CD4-positive, alpha-beta T cell (primary cell): ENCODE measurements at regions of chr9 and their contacts with region 1.

Region 1: GRCh38 chr9:7976167-7976755 is 176.7 kb upstream of the DMAC1 start:
- DNase-seq: peak in 12 of 14 experiments; percentile 4 to 94 (median 42)
- ATAC-seq: peak; percentile 97
- H3K4me3 ChIP-seq: peak overlapping the region; percentile 4
- H3K4me3 Mint-ChIP-seq: peak overlapping the region; percentile 32
- H3K27ac ChIP-seq: peak overlapping the region; percentile 3 to 56
- H3K27ac Mint-ChIP-seq: peak overlapping the region; percentile 82
- H3K4me1 ChIP-seq: peaks cover 42% of the 10 kb centered on the region
- H3K4me1 Mint-ChIP-seq: peaks cover 73% of the 10 kb centered on the region
- H3K27me3 ChIP-seq: no peaks in the 10 kb centered on the region
- H3K27me3 Mint-ChIP-seq: no peaks in the 10 kb centered on the region
- CTCF ChIP-seq: no peak

Region 2: DNA sequence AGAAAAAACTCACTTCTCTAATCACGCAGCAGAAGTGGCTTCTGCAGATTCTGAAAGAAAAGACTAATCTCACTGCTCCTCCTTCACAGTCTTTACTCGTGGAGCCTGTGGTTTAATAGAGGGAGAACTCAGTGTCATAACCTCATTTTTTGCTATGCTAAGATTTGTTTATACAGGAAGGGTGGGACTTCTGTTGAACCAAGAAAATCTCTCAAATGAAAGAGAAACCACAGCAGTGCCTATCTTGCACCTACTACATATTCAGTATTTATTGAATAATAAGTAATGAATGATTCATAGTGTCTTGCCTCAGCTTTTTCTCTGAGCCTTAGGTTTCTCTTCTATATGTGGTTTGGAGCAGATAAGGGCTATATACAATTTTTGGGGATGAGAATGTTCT is 40.6 kb before region 1 on chr9:
- CTCF ChIA-PET with region 1: no interaction called
- POLR2A ChIA-PET with region 1: interaction called, 8 read pairs
- intact Hi-C with region 1: loop called (anchors 1 to 5 kb)
- DNase-seq: peak in 4 of 14 experiments; percentile 2 to 90 (median 68)
- ATAC-seq: peak; percentile 96
- H3K4me3 ChIP-seq: peak overlapping the region; percentile 17
- H3K4me3 Mint-ChIP-seq: peak overlapping the region; percentile 65
- H3K27ac ChIP-seq: peak overlapping the region; percentile 64 to 77
- H3K27ac Mint-ChIP-seq: peak overlapping the region; percentile 92
- H3K4me1 ChIP-seq: peaks cover 21% of the 10 kb centered on the region
- H3K4me1 Mint-ChIP-seq: peaks cover 24% of the 10 kb centered on the region
- H3K27me3 ChIP-seq: no peaks in the 10 kb centered on the region
- H3K27me3 Mint-ChIP-seq: no peaks in the 10 kb centered on the region
- CTCF ChIP-seq: no peak

Region 3: DNA sequence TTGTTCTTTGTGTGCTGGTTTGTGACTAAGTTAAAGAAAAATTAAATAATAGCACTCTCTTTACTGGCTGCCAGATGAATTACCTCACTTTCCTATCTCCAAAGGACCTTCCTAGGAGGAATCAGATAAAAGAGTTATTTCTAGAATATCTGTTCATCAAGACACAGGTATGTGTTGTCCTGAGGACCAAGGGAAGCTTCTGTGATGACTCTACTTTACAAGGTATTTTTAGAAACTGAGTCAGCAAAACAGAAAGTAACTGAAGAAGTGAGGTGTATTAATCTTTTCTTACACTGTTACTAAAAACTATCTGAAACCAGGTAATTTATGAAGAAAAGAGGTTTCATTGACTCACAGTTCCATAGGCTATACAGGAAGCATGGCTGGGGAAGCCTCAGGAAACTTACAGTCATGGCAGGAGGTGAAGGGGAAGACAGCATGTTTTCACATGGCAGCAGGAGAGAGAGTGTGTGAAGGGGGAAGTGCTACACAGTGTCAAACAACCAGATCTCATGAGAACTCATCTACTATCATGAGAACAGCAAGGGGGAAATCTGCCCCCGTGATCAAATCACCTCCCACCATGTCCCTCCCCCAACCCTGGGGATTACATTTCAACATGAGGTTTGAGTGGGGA is 12.5 kb after region 1 on chr9:
- CTCF ChIA-PET with region 1: no interaction called
- POLR2A ChIA-PET with region 1: no interaction called
- intact Hi-C with region 1: no loop called
- DNase-seq: no peak
- ATAC-seq: no peak
- H3K4me3 ChIP-seq: no peak overlapping the region
- H3K4me3 Mint-ChIP-seq: no peak overlapping the region
- H3K27ac ChIP-seq: no peak overlapping the region
- H3K27ac Mint-ChIP-seq: no peak overlapping the region
- H3K4me1 ChIP-seq: no peaks in the 10 kb centered on the region
- H3K4me1 Mint-ChIP-seq: no peaks in the 10 kb centered on the region
- H3K27me3 ChIP-seq: no peaks in the 10 kb centered on the region
- H3K27me3 Mint-ChIP-seq: no peaks in the 10 kb centered on the region
- CTCF ChIP-seq: no peak

Region 4: DNA sequence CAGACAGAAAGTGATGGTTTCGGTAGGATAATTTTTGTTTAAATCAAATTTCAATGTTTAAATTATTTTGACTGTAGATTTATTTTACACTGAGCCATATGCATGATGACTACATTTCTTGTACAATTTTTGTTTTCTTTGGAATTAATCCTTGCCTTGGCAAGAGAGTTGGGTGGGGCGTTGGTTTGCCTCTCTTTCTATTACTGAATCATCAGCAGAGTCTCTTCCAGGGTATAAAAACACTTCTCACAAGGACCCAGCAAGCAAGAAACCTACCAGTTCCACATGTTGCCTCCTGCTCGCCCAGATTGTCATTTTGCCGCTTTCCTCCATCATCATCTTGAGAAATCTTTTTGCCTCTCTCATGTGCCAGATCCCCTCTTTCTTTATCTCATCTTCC is 278.3 kb after region 1 on chr9:
- CTCF ChIA-PET with region 1: no interaction called
- POLR2A ChIA-PET with region 1: no interaction called
- intact Hi-C with region 1: no loop called
- DNase-seq: no peak
- ATAC-seq: no peak
- H3K4me3 ChIP-seq: no peak overlapping the region
- H3K4me3 Mint-ChIP-seq: no peak overlapping the region
- H3K27ac ChIP-seq: no peak overlapping the region
- H3K27ac Mint-ChIP-seq: no peak overlapping the region
- H3K4me1 ChIP-seq: no peaks in the 10 kb centered on the region
- H3K4me1 Mint-ChIP-seq: no peaks in the 10 kb centered on the region
- H3K27me3 ChIP-seq: no peaks in the 10 kb centered on the region
- H3K27me3 Mint-ChIP-seq: no peaks in the 10 kb centered on the region
- CTCF ChIP-seq: no peak